Activated CD4-positive, alpha-beta memory T cell treated with anti-CD3 and anti-CD28 coated beads for 36 hours (primary cell): ENCODE measurements at regions of chr22 and their contacts with region 1.

Region 1: GRCh38 chr22:43945632-43946383 is 9.4 kb upstream of the SAMM50 start:
- DNase-seq: peak; percentile 80
- H3K4me3 Mint-ChIP-seq: no peak overlapping the region
- H3K27ac Mint-ChIP-seq: no peak overlapping the region
- H3K4me1 Mint-ChIP-seq: no peaks in the 10 kb centered on the region
- H3K27me3 Mint-ChIP-seq: peaks cover 4% of the 10 kb centered on the region

Region 2: DNA sequence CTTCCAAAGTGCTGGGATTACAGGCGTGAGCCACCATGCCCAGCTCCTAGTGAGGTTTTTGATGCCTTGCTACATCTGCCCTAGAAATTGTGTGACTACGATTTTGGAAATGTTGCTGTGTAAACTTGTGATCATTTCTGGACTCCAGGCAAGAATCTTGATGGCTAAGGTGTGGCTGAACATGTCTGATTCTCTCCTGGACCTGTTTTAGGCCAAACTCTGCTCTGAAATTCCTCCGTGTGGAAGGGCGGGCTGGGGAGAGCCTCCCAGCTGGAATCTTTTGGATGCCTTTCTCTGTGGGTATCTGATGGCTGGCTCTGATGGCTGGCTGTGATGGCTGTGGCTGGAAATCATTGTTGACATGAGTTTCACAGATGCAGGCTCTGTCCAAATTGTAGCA is 14.0 kb before region 1 on chr22:
- CTCF ChIA-PET with region 1: interaction called, 12 read pairs
- POLR2A ChIA-PET with region 1: no interaction called
- intact Hi-C with region 1: no loop called
- DNase-seq: no peak
- H3K4me3 Mint-ChIP-seq: no peak overlapping the region
- H3K27ac Mint-ChIP-seq: no peak overlapping the region
- H3K4me1 Mint-ChIP-seq: no peaks in the 10 kb centered on the region
- H3K27me3 Mint-ChIP-seq: peaks cover 13% of the 10 kb centered on the region